ENCODE measurements at regions of chr2 and their contacts with region 1.

Region 1: DNA sequence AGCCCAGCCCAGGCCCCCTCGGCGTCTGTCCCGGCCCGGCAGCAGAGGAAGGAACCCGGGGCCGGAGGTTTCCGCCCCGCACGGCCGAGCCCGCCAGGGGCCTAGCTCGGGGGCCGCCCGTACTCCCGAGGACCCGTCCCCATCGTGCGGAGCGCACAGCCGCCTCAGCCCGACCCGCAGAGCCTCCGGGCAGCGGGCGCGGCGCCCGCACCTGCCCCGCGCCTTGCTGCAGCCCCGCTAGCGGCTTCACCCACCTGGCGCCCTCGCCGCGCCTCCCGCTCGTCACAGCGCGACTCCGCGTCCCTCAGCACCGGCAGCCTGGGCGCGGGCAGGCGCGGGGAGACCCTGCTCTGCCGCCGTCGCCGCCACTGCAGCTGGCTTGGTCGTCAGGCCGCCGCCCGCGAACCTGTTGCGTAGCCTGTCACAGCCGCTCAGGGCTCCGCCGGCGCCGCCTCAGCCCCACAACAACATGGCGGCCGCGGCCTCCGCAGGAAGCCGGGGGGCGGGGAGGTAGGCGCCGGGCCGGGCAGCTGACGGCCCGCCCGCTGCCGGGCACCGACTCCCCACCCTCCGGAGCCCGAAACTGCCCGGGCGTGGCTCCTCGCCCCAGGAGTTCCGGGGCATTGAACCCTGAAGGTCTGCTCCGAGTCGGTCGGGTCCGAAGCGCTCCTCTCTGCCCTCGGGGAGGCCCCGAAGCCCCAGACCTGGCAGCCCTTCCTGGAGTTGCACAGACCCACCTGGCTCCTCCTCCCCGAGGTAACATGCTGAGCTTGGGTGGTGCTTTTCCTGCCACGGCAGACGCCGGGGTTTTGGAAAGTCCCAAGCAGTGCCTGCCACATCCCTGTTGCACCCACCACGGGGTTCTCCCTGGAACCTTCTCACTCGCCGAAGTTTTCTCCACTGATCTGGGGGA is at the start of gene ITSN2:
- DNase-seq: peak; percentile 62
- ATAC-seq: peak; percentile 95
- H3K4me3 ChIP-seq: peak within 1 kb of the TSS; percentile 92 to 95 (median 93)
- H3K27ac ChIP-seq: peak within 1 kb of the TSS; percentile 67
- H3K4me1 ChIP-seq: peaks cover 40% of the 10 kb centered on the region
- H3K27me3 ChIP-seq: no peaks in the 10 kb centered on the region; a peak in 1 of 5 replicates
- CTCF ChIP-seq: peak; percentile 5; the same call in 1 of the 2 replicates
- EP300 ChIP-seq: peak in 1 of 2 experiments; percentile 42; a peak in 1 of 4 replicates
- POLR2A ChIP-seq: peak; percentile 71 to 74
- RAD21 ChIP-seq: peak; percentile 56
- total RNA-seq, gene ITSN2: 26.6 and 33.4 TPM in 2 replicates

Region 2: GRCh38 chr2:23055251-23055650 is 1305.1 kb before region 1 on chr2:
- CTCF ChIA-PET with region 1: no interaction called
- POLR2A ChIA-PET with region 1: no interaction called
- in situ Hi-C with region 1: no loop called
- intact Hi-C with region 1: no loop called
- DNase-seq: no peak
- ATAC-seq: no peak
- H3K4me3 ChIP-seq: no peak overlapping the region
- H3K27ac ChIP-seq: no peak overlapping the region
- H3K4me1 ChIP-seq: no peaks in the 10 kb centered on the region
- H3K27me3 ChIP-seq: no peaks in the 10 kb centered on the region
- CTCF ChIP-seq: no peak
- EP300 ChIP-seq: no peak
- POLR2A ChIP-seq: no peak
- RAD21 ChIP-seq: no peak

Region 3: DNA sequence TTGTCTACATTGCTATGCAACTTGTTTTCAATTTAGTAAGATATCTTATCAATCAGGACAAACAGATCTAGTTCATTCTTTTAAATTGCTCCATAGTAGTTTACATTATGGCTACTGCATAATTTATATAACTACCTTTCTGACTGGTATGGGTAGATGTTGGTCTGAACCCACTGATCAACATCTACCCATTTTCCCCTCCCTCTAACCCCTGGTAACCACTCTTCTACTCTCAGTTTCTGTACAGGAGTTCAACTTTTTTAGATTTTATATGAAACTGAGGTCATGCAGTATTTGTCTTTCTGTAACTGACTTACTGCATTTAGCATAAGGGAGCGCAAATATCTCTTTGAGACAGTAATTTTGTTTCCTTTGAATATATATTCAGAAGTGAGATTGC is 73.1 kb before region 1 on chr2:
- CTCF ChIA-PET with region 1: no interaction called
- POLR2A ChIA-PET with region 1: no interaction called
- in situ Hi-C with region 1: no loop called
- intact Hi-C with region 1: no loop called
- DNase-seq: no peak
- ATAC-seq: no peak
- H3K4me3 ChIP-seq: no peak overlapping the region
- H3K27ac ChIP-seq: no peak overlapping the region
- H3K4me1 ChIP-seq: no peaks in the 10 kb centered on the region
- H3K27me3 ChIP-seq: no peaks in the 10 kb centered on the region
- CTCF ChIP-seq: no peak
- EP300 ChIP-seq: no peak
- POLR2A ChIP-seq: no peak
- RAD21 ChIP-seq: no peak

Region 4: GRCh38 chr2:24375349-24376087 is 15.2 kb after region 1 on chr2:
- CTCF ChIA-PET with region 1: no interaction called
- POLR2A ChIA-PET with region 1: interaction called, 10 read pairs
- in situ Hi-C with region 1: no loop called
- intact Hi-C with region 1: no loop called
- DNase-seq: no peak
- ATAC-seq: no peak; the same call in 1 of the 3 replicates
- H3K4me3 ChIP-seq: no peak overlapping the region
- H3K27ac ChIP-seq: no peak overlapping the region
- H3K4me1 ChIP-seq: peaks cover 7% of the 10 kb centered on the region
- H3K27me3 ChIP-seq: no peaks in the 10 kb centered on the region
- CTCF ChIP-seq: no peak
- EP300 ChIP-seq: no peak
- POLR2A ChIP-seq: no peak
- RAD21 ChIP-seq: no peak

Region 5: DNA sequence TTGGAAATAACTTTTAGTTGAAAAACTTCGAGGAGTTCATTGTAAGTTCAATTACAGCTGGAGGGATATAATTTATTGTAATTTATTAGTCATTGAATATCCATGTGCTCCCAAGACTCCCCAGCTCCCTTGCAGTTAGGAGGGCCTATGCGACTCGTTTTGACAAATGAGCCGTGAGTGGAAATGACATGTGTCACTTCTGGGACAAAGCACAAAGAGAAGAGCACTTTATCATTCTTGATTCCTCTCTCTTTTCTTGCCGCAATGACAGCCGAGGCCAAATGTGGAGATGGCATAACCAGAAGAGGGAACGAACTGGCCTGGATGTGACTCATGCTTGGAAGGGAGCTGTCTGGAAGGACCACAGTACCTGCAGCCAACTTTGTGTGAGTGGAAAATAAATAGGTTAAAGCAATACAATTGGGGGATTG is 44.2 kb after region 1 on chr2:
- CTCF ChIA-PET with region 1: no interaction called
- POLR2A ChIA-PET with region 1: interaction called, 10 read pairs
- in situ Hi-C with region 1: no loop called
- intact Hi-C with region 1: no loop called
- DNase-seq: no peak
- ATAC-seq: no peak
- H3K4me3 ChIP-seq: no peak overlapping the region
- H3K27ac ChIP-seq: no peak overlapping the region
- H3K4me1 ChIP-seq: peaks cover 36% of the 10 kb centered on the region
- H3K27me3 ChIP-seq: no peaks in the 10 kb centered on the region
- CTCF ChIP-seq: no peak
- EP300 ChIP-seq: no peak
- POLR2A ChIP-seq: no peak
- RAD21 ChIP-seq: no peak

Region 6: DNA sequence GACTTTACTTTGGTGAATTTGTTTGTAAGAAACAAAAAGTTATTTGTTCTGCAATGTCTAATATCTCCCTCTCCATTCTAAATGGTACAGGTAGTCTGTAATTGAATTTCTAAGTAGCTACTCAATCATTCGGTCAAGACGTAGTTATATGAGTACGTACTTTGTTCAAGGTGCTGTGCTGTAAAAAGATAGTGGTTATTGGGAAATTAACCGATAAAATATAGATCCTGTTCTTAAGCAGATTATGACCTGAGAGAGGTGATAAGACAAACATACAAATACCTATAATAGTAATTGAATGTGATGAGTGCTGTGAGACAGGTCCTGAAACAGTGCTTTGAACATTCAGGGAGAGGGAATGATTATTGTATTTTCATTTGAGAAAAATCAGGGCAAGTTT is 137.8 kb after region 1 on chr2:
- CTCF ChIA-PET with region 1: no interaction called
- POLR2A ChIA-PET with region 1: no interaction called
- in situ Hi-C with region 1: no loop called
- intact Hi-C with region 1: loop called (anchors 1 kb)
- DNase-seq: no peak
- ATAC-seq: no peak
- H3K4me3 ChIP-seq: no peak overlapping the region
- H3K27ac ChIP-seq: no peak overlapping the region
- H3K4me1 ChIP-seq: peaks cover 6% of the 10 kb centered on the region
- H3K27me3 ChIP-seq: no peaks in the 10 kb centered on the region
- CTCF ChIP-seq: no peak
- EP300 ChIP-seq: no peak
- POLR2A ChIP-seq: no peak
- RAD21 ChIP-seq: no peak

Measured in HepG2 (cell line).